AG04449 (cell line): ENCODE measurements at regions of chr18 and their contacts with region 1.

Region 1: GRCh38 chr18:10787293-10787901 is 261.6 kb downstream of the NAPG start:
- DNase-seq: peak; percentile 9
- H3K4me3 ChIP-seq: no peak overlapping the region
- CTCF ChIP-seq: peak; percentile 70

Region 2: GRCh38 chr18:10776493-10776892 is 10.9 kb before region 1 on chr18:
- CTCF ChIA-PET with region 1: interaction called, 14 read pairs
- POLR2A ChIA-PET with region 1: no interaction called
- DNase-seq: no peak
- H3K4me3 ChIP-seq: no peak overlapping the region
- CTCF ChIP-seq: no peak

Region 3: GRCh38 chr18:10798727-10799308 is 11.4 kb after region 1 on chr18:
- CTCF ChIA-PET with region 1: interaction called, 18 read pairs
- POLR2A ChIA-PET with region 1: no interaction called
- DNase-seq: no peak
- H3K4me3 ChIP-seq: no peak overlapping the region
- CTCF ChIP-seq: no peak

Region 4: GRCh38 chr18:11149441-11150270 is 362.3 kb after region 1 on chr18 and contains the start of gene PIEZO2:
- CTCF ChIA-PET with region 1: interaction called, 11 read pairs
- POLR2A ChIA-PET with region 1: no interaction called
- DNase-seq: no peak
- H3K4me3 ChIP-seq: peak within 1 kb of the TSS; percentile 57
- CTCF ChIP-seq: no peak